Uterus (tissue), 4 donors: ENCODE measurements at regions of chr12 and their contacts with region 1.

Region 1: GRCh38 chr12:106136263-106136662 is 2.5 kb downstream of the NUAK1 start:
- DNase-seq: peak; percentile 92 to 95
- H3K4me3 ChIP-seq: peak overlapping the region; percentile 86 to 91
- H3K27ac ChIP-seq: peak overlapping the region; percentile 95 to 96
- H3K4me1 ChIP-seq: peaks cover 0 to 4% of the 10 kb centered on the region in 2 donors
- H3K27me3 ChIP-seq: no peaks in the 10 kb centered on the region
- CTCF ChIP-seq: peak; percentile 84 to 92 (median 89)
- POLR2A ChIP-seq: no peak

Region 2: DNA sequence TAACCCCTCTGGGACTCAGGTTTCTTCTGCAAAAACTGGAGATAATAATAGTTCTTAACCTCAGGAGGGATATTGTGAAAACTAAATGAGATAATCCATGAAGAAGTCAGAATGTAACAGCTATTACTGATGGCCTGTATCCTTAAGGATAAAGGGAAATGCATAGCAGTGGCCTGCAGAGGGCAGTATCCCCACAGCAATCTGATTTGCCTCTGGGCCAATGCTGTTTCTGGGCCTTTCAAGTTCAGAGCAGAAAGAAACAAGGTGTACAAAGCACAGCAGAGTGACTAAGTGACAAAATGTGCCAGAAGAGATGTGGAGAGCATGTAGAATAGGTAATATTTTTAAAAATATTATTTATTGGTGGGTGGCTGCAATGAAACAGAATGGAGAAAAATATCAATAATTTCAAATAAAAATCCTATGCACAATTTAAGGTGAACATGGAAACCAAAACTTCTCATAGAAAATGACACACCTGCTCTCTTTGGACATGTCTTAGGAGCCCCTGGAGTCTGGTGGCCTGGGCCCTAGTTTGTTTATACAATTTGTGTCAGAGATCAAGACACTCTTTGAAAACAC is 715.5 kb before region 1 on chr12:
- intact Hi-C with region 1: loop called (anchors 10 kb)
- DNase-seq: peak; percentile 78 to 81
- H3K4me3 ChIP-seq: no peak overlapping the region
- H3K27ac ChIP-seq: peak overlapping the region in 1 of 2 donors; percentile 8
- H3K4me1 ChIP-seq: peaks cover 0 to 4% of the 10 kb centered on the region in 2 donors
- H3K27me3 ChIP-seq: no peaks in the 10 kb centered on the region
- CTCF ChIP-seq: peak; percentile 88 to 95 (median 92)
- POLR2A ChIP-seq: no peak

Region 3: GRCh38 chr12:105705765-105706164 is 430.5 kb before region 1 on chr12:
- intact Hi-C with region 1: loop called (anchors 5 kb)
- DNase-seq: peak; percentile 46 to 73
- H3K4me3 ChIP-seq: no peak overlapping the region
- H3K27ac ChIP-seq: peak overlapping the region; percentile 12 to 39
- H3K4me1 ChIP-seq: no peaks in the 10 kb centered on the region
- H3K27me3 ChIP-seq: no peaks in the 10 kb centered on the region
- CTCF ChIP-seq: peak; percentile 69 to 83 (median 72)
- POLR2A ChIP-seq: no peak

Region 4: GRCh38 chr12:106078358-106079010 is 57.8 kb before region 1 on chr12:
- intact Hi-C with region 1: loop called (anchors 10 kb)
- DNase-seq: peak; percentile 62 to 64
- H3K4me3 ChIP-seq: no peak overlapping the region
- H3K27ac ChIP-seq: peak overlapping the region; percentile 72 to 83
- H3K4me1 ChIP-seq: peaks cover 16 to 18% of the 10 kb centered on the region in 2 donors
- H3K27me3 ChIP-seq: no peaks in the 10 kb centered on the region
- CTCF ChIP-seq: no peak
- POLR2A ChIP-seq: no peak